Activated CD4-positive, alpha-beta memory T cell treated with anti-CD3 and anti-CD28 coated beads for 36 hours (primary cell): ENCODE measurements at regions of chr14 and their contacts with region 1.

Region 1: DNA sequence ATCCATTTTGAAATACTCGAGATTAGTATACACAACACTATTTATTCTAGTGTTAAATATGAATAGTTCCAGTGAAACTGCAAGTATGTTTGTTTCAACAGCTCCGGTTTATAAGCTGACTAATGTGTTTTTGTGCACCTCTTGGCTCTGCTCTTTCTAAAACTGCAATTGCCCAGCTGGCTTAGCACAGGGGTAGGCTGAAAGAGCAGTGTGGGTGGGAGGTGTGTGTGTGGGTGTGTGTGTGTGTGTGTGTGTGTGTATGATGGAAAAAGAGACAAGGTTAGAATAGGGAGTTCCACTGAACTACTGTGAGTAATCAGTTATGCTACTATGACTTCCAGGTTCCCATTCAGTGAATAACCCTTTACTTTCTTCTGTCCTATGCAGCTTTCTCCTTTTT is 37.8 kb upstream of the DDHD1 start:
- DNase-seq: peak; percentile 88
- H3K4me3 Mint-ChIP-seq: peak overlapping the region; percentile 17
- H3K27ac Mint-ChIP-seq: peak overlapping the region; percentile 81
- H3K4me1 Mint-ChIP-seq: peaks cover 42% of the 10 kb centered on the region
- H3K27me3 Mint-ChIP-seq: peaks cover 3% of the 10 kb centered on the region

Region 2: GRCh38 chr14:52413729-52414408 is 777.1 kb before region 1 on chr14:
- CTCF ChIA-PET with region 1: no interaction called
- POLR2A ChIA-PET with region 1: no interaction called
- intact Hi-C with region 1: loop called (anchors 5 kb)
- DNase-seq: no peak
- H3K4me3 Mint-ChIP-seq: peak overlapping the region; percentile 4
- H3K27ac Mint-ChIP-seq: peak overlapping the region; percentile 69
- H3K4me1 Mint-ChIP-seq: peaks cover 49% of the 10 kb centered on the region
- H3K27me3 Mint-ChIP-seq: no peaks in the 10 kb centered on the region

Region 3: GRCh38 chr14:52918486-52918885 is 272.5 kb before region 1 on chr14:
- CTCF ChIA-PET with region 1: no interaction called
- POLR2A ChIA-PET with region 1: no interaction called
- intact Hi-C with region 1: loop called (anchors 5 kb)
- DNase-seq: peak; percentile 18
- H3K4me3 Mint-ChIP-seq: no peak overlapping the region
- H3K27ac Mint-ChIP-seq: peak overlapping the region; percentile 35
- H3K4me1 Mint-ChIP-seq: peaks cover 25% of the 10 kb centered on the region
- H3K27me3 Mint-ChIP-seq: no peaks in the 10 kb centered on the region

Region 4: DNA sequence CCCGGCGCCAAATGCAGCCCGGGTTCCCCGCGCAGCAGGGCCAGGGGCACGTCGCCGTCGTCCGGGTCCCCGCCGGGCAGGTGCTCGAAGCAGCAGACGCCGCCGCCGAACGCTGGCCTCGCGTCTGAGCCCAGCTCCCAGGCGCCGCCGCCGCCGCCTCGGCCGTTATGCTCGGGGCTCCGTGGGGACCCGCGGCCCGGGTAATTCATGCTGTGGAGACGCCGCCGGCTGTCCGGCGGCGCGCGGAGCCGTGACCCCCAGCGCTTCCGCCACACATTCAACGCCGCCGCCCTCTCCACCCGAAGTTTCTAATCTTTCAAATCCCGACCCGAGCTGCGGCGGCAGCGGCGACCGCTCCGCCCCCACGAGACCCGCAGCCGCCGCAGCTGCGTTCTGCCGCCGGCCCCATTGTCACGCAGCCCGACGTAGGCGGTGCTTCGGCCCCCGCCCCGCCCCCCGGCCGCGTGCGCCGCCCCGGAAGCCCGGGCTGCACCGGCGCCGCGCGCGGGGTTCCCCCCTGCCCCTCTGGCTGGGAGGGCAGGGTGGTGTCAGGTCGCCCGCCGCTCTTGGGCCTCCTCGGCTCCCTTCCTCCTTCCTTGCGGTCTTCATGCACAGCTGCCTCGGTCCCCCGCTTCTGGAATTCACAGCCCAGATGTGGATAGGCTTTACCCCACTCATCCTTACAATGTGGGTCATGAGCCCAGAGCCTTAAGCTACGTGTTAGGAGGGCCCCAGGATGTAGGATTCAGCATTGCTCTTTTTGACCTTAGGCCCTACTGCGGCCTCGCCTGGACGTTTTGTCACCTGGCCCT is 37.8 kb before region 1 on chr14 and contains the start of gene DDHD1:
- CTCF ChIA-PET with region 1: interaction called, 15 read pairs
- POLR2A ChIA-PET with region 1: interaction called, 50 read pairs
- intact Hi-C with region 1: loop called (anchors 1 kb)
- DNase-seq: peak; percentile 88
- H3K4me3 Mint-ChIP-seq: peak within 1 kb of the TSS; percentile 100
- H3K27ac Mint-ChIP-seq: peak within 1 kb of the TSS; percentile 99
- H3K4me1 Mint-ChIP-seq: peaks cover 35% of the 10 kb centered on the region
- H3K27me3 Mint-ChIP-seq: no peaks in the 10 kb centered on the region
- total RNA-seq, gene DDHD1: 40.6 to 42.7 TPM

Region 5: DNA sequence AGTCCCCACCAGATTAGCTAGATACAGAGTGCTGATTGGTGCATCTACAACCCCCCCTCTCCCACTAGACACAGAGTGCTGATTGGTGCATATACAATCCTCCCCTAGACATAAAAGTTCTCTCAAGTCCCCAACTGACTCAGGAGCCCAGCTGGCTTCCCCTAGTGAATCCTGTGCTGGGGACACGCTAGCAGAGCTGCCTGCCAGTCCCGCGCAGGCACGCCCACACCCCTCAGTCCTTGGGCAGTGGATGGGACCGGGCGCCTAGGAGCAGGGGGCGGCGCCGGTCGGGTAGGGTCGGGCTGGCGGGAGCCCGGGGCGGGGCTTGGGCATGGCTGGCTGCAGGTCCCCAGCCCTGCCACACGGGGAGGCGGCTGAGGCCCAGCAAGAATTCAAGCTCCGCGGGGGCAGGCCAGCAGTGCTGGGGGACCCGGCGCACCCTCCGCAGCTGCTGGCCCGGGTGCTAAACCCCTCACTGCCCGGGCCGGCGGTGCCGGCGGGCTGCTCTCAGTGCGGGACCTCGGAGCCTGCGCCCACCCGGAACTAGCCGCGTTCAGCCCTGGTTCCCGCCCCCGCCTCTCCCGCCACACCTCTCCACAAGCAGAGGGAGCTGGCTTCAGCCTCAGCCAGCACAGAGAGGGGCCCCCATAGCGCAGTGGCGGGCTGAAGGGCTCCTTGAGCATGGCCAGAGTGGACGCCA is 26.5 kb after region 1 on chr14:
- CTCF ChIA-PET with region 1: interaction called, 12 read pairs
- POLR2A ChIA-PET with region 1: interaction called, 6 read pairs
- intact Hi-C with region 1: loop called (anchors 1 kb)
- DNase-seq: peak; percentile 88
- H3K4me3 Mint-ChIP-seq: peak overlapping the region; percentile 80
- H3K27ac Mint-ChIP-seq: peak overlapping the region; percentile 52
- H3K4me1 Mint-ChIP-seq: peaks cover 5% of the 10 kb centered on the region
- H3K27me3 Mint-ChIP-seq: no peaks in the 10 kb centered on the region